ENCODE measurements at regions of chr4 and their contacts with region 1.

Region 1: GRCh38 chr4:81466841-81467671 is 4.7 kb downstream of the RASGEF1B start:
- DNase-seq: peak; percentile 54
- ATAC-seq: no peak
- H3K4me3 ChIP-seq: no peak overlapping the region
- H3K27ac ChIP-seq: no peak overlapping the region
- H3K4me1 ChIP-seq: peaks cover 3% of the 10 kb centered on the region; the same call in 1 of the 2 replicates
- H3K27me3 ChIP-seq: peaks cover 14% of the 10 kb centered on the region
- CTCF ChIP-seq: peak; percentile 71; the same call in 1 of the 2 replicates

Region 2: GRCh38 chr4:81405894-81406401 is 61.1 kb before region 1 on chr4:
- CTCF ChIA-PET with region 1: no interaction called
- POLR2A ChIA-PET with region 1: no interaction called
- in situ Hi-C with region 1: no loop called
- intact Hi-C with region 1: loop called (anchors 5 kb)
- DNase-seq: peak; percentile 41
- ATAC-seq: peak; percentile 78
- H3K4me3 ChIP-seq: no peak overlapping the region
- H3K27ac ChIP-seq: no peak overlapping the region
- H3K4me1 ChIP-seq: no peaks in the 10 kb centered on the region
- H3K27me3 ChIP-seq: no peaks in the 10 kb centered on the region; the same call in 1 of the 2 replicates
- CTCF ChIP-seq: peak; percentile 71; the same call in 1 of the 2 replicates

Region 3: GRCh38 chr4:81844717-81845116 is 377.7 kb after region 1 on chr4:
- CTCF ChIA-PET with region 1: interaction called, 4 read pairs
- POLR2A ChIA-PET with region 1: no interaction called
- in situ Hi-C with region 1: no loop called
- intact Hi-C with region 1: loop called (anchors 2 kb)
- DNase-seq: peak; percentile 35
- ATAC-seq: no peak
- H3K4me3 ChIP-seq: no peak overlapping the region
- H3K27ac ChIP-seq: no peak overlapping the region
- H3K4me1 ChIP-seq: no peaks in the 10 kb centered on the region
- H3K27me3 ChIP-seq: no peaks in the 10 kb centered on the region
- CTCF ChIP-seq: peak; percentile 60; the same call in 1 of the 2 replicates

Region 4: DNA sequence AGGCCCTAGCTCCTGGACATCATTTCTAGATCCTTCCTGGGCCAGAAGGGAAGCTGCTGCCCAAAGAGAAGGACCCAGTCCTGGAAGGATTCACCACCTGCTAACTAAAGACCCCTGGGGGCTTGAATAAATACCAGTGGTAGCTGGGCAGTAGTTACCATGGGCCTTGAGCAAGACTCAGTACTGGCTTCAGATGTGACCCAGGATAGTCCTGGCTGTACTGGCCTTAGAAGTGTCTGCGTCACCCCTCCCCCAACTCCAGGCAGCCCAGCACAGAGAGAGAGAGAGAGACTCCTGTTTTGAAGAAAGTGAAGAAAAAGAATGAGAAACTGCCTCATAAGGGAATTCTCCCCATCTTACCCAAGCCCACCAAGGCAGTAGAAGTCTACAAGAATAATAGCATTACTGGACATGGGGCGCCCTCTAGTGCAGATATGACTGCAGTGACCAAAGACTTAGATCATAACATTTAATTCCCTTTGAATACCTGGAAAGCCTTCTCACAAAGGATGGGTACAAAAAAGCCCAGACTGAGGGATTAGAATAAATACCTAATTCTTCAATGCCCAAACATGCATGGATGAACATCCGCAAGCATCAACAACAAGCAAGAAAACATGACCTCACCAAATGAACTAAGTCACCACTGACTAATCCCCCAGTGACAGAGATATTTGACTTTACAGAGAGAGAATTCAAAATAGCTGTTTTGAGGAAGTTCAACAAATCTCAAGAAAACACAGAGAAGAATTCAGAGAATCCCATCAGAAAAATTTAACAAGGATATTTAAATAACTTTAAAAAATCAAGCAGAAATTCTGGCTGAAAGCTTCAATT is 735.0 kb after region 1 on chr4:
- CTCF ChIA-PET with region 1: interaction called, 4 read pairs
- POLR2A ChIA-PET with region 1: no interaction called
- in situ Hi-C with region 1: no loop called
- intact Hi-C with region 1: loop called (anchors 5 kb)
- DNase-seq: peak; percentile 7
- ATAC-seq: peak; percentile 74; the same call in 1 of the 2 replicates
- H3K4me3 ChIP-seq: no peak overlapping the region
- H3K27ac ChIP-seq: no peak overlapping the region
- H3K4me1 ChIP-seq: no peaks in the 10 kb centered on the region
- H3K27me3 ChIP-seq: no peaks in the 10 kb centered on the region
- CTCF ChIP-seq: peak; percentile 73

Region 5: DNA sequence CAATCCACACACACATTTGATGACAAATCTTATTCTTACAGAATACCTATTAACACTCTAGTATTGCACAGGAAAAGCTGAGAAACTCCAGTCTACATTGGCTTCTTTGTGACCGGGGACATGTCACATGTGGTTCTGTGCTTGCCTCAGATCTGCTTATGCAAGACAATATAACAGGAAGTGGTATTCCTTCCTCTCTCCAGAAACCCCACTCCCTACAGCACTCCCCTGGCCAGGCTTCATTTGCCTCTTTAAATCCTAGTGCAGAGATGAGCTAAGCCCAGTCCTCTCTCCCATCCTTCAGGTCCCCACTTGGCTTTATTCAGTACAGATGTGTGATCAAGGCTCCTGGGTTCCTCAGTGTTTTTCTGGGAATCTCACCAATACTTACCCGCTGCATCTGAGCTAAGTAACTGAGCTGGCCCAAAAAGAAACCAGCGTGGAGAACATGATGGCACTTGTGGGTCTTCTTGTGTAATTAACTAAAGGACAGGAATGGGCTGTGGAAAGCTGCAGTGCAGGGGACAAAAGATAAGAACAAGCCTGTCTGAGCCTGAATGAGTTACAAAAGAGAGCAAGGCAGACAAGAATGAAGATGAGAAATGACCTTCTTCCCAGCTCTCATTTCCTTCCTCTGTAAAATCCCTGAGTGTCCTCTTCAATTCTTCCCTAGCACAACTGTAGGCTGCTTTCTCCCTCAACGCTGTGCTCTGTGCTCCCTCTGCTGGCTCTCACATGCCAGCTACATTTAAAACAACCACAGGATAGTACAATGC is 801.2 kb after region 1 on chr4:
- CTCF ChIA-PET with region 1: interaction called, 3 read pairs
- POLR2A ChIA-PET with region 1: no interaction called
- in situ Hi-C with region 1: no loop called
- intact Hi-C with region 1: loop called (anchors 5 kb)
- DNase-seq: peak; percentile 35
- ATAC-seq: peak; percentile 99
- H3K4me3 ChIP-seq: no peak overlapping the region
- H3K27ac ChIP-seq: no peak overlapping the region
- H3K4me1 ChIP-seq: no peaks in the 10 kb centered on the region
- H3K27me3 ChIP-seq: peaks cover 9% of the 10 kb centered on the region
- CTCF ChIP-seq: peak; percentile 83

Measured in Panc1 (cell line).